ENCODE measurements at regions of chr14 and their contacts with region 1.

Region 1: GRCh38 chr14:31219169-31219568 is 11.6 kb upstream of the HECTD1 start:
- DNase-seq: no peak
- ATAC-seq: no peak
- H3K4me3 ChIP-seq: no peak overlapping the region
- H3K27ac ChIP-seq: no peak overlapping the region
- H3K4me1 ChIP-seq: no peaks in the 10 kb centered on the region
- H3K27me3 ChIP-seq: no peaks in the 10 kb centered on the region
- CTCF ChIP-seq: no peak

Region 2: DNA sequence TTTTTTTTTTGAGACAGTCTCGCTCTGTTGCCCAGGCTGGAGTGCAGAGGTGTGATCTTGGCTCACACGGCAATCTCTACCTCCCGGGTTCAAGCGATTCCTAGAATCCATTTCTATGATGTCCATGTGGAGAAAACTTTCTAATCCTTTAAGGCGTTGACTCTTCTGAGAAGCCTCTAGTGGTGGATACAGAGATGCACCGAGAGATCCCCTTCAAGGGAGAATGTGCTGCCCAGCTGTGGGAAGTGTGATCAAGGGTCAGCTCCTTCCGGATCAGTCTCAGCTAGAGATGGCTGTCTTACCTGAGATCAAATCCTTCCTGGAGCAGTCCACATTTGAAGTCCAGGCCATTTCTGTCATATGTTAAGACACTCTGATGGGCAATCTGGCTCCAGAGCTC is 81.1 kb after region 1 on chr14:
- intact Hi-C with region 1: loop called in 1 of 2 experiments (anchors 10 kb)
- DNase-seq: no peak
- ATAC-seq: peak in 1 of 4 donors; percentile 34
- H3K4me3 ChIP-seq: no peak overlapping the region
- H3K27ac ChIP-seq: no peak overlapping the region
- H3K4me1 ChIP-seq: peaks cover 5% of the 10 kb centered on the region
- H3K27me3 ChIP-seq: no peaks in the 10 kb centered on the region
- CTCF ChIP-seq: no peak